PC-9 (cell line): ENCODE measurements at regions of chr15 and their contacts with region 1.

Region 1: DNA sequence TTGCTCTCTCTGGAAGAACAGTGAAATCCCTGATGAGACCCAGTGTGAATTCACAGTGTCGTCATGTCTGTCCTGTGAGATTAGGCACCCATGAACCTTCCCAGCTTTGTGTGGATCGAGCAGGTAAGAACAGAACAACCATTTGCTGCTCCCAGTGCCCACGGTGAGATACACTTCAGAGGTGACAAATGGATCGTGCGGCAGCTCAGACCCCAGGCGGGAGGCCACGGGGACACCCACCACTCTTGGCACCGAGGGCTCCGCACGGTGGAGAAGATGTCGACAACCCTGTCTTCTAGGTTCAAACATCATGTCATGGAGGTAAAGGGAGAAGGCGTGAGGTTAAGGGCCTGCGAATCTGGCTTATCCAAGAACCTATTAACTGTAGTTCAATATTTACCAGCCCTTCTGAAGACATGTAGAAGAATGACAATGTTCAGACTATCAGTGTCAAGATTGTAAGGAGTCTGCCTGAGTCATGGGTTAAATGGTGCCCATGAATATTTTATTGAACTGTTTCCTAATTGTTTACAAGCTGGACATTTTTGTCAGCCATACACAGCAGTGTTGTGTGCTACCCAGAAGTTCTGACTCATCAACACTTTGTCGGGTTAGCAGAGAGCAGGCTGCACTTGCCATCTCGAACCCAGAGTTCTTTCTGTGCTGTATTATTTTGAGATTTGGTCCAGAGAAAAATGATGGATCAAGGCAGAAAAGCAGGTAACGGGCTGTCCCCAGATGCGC is 15.5 kb upstream of the PCSK6 start:
- DNase-seq: peak in 1 of 2 experiments; percentile 54
- H3K4me3 ChIP-seq: no peak overlapping the region
- H3K27ac ChIP-seq: no peak overlapping the region
- H3K4me1 ChIP-seq: peaks cover under 1% of the 10 kb centered on the region
- H3K27me3 ChIP-seq: no peaks in the 10 kb centered on the region
- CTCF ChIP-seq: no peak

Region 2: GRCh38 chr15:100968050-100968966 is 536.7 kb before region 1 on chr15:
- CTCF ChIA-PET with region 1: no interaction called
- POLR2A ChIA-PET with region 1: interaction called, 28 read pairs
- intact Hi-C with region 1: no loop called
- DNase-seq: peak in 1 of 2 experiments; percentile 65
- H3K4me3 ChIP-seq: no peak overlapping the region
- H3K27ac ChIP-seq: no peak overlapping the region
- H3K4me1 ChIP-seq: no peaks in the 10 kb centered on the region; the same call in 1 of the 2 replicates
- H3K27me3 ChIP-seq: no peaks in the 10 kb centered on the region
- CTCF ChIP-seq: no peak

Region 3: DNA sequence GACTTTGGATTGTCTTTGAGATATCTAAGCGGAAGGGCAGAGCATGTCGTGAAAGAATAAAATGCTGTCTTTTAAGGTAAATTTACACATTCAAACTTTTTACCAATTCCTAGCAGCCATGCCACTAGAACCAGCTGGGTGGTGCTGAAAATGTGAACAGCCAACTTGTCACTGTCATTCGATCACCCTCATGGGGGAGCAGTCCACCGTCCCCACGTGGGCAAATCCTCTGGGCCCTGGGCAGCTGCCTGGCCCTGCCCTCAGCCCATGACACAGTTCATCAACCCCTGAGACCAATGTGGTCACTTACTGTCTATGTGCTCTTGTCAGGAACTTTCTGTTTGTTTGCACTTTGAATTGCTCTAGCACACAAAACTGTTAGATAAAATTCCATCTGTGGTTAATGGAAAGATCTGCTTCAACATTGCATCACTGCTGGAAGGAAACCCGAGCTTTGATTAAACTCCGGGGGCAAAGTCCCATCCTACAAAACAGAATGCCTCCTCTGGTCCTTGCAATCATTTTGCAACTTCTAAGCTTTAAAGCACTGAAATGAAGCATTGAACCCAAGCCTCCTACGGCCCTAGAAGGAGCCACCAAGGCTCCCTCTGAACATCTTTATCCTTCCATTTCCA is 65.6 kb before region 1 on chr15:
- CTCF ChIA-PET with region 1: no interaction called
- POLR2A ChIA-PET with region 1: no interaction called
- intact Hi-C with region 1: no loop called
- DNase-seq: no peak
- H3K4me3 ChIP-seq: no peak overlapping the region
- H3K27ac ChIP-seq: no peak overlapping the region
- H3K4me1 ChIP-seq: no peaks in the 10 kb centered on the region
- H3K27me3 ChIP-seq: no peaks in the 10 kb centered on the region
- CTCF ChIP-seq: no peak

Region 4: GRCh38 chr15:101608201-101608600 is 103.2 kb after region 1 on chr15:
- CTCF ChIA-PET with region 1: no interaction called
- POLR2A ChIA-PET with region 1: no interaction called
- intact Hi-C with region 1: no loop called
- DNase-seq: peak in 1 of 2 experiments; percentile 20
- H3K4me3 ChIP-seq: no peak overlapping the region
- H3K27ac ChIP-seq: no peak overlapping the region
- H3K4me1 ChIP-seq: no peaks in the 10 kb centered on the region
- H3K27me3 ChIP-seq: no peaks in the 10 kb centered on the region
- CTCF ChIP-seq: no peak